ENCODE measurements at regions of chr1 and their contacts with region 1.

Region 1: GRCh38 chr1:156565519-156565918 is 6.8 kb downstream of the IQGAP3 start:
- DNase-seq: no peak
- H3K4me3 ChIP-seq: no peak overlapping the region
- H3K27ac ChIP-seq: no peak overlapping the region
- H3K4me1 ChIP-seq: no peaks in the 10 kb centered on the region
- CTCF ChIP-seq: no peak

Region 2: GRCh38 chr1:156465747-156466365 is 99.7 kb before region 1 on chr1:
- CTCF ChIA-PET with region 1: interaction called, 11 read pairs
- POLR2A ChIA-PET with region 1: no interaction called
- intact Hi-C with region 1: no loop called
- DNase-seq: peak; percentile 39
- H3K4me3 ChIP-seq: no peak overlapping the region
- H3K27ac ChIP-seq: no peak overlapping the region
- H3K4me1 ChIP-seq: no peaks in the 10 kb centered on the region
- CTCF ChIP-seq: peak; percentile 69